WTC11 (cell line): ENCODE measurements at regions of chr18 and their contacts with region 1.

Region 1: GRCh38 chr18:12890506-12890905 is 6.5 kb upstream of the PTPN2 start:
- DNase-seq: no peak
- ATAC-seq: peak; percentile 74
- H3K4me3 Mint-ChIP-seq: no peak overlapping the region
- H3K27ac Mint-ChIP-seq: no peak overlapping the region
- H3K4me1 Mint-ChIP-seq: peaks cover 9% of the 10 kb centered on the region
- H3K27me3 Mint-ChIP-seq: no peaks in the 10 kb centered on the region
- CTCF ChIP-seq: no peak

Region 2: DNA sequence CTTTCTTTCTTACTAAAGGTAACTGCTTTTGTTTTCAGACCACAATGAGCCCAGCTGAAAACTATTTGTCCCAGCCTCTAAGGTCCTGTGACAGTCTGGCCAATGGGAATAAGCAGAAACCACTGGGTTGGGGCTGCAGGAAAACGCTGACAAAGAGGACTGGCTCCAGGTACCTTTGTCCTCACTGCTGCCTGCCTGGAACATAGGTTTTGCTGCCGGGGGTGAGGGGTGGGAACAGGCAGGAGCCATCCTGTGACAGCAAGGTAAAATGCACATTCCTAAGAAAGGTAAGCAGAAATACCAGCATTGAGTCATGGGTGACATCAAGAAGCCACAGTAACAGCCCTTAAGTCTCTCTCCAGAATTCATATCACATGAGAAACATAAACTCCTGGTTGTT is 28.0 kb before region 1 on chr18:
- CTCF ChIA-PET with region 1: interaction called, 10 read pairs
- POLR2A ChIA-PET with region 1: interaction called, 5 read pairs
- DNase-seq: peak; percentile 69
- ATAC-seq: peak; percentile 99
- H3K4me3 Mint-ChIP-seq: peak overlapping the region; percentile 49; the same call in 1 of the 2 replicates
- H3K27ac Mint-ChIP-seq: peak overlapping the region; percentile 98
- H3K4me1 Mint-ChIP-seq: peaks cover 26% of the 10 kb centered on the region
- H3K27me3 Mint-ChIP-seq: no peaks in the 10 kb centered on the region
- CTCF ChIP-seq: no peak

Region 3: DNA sequence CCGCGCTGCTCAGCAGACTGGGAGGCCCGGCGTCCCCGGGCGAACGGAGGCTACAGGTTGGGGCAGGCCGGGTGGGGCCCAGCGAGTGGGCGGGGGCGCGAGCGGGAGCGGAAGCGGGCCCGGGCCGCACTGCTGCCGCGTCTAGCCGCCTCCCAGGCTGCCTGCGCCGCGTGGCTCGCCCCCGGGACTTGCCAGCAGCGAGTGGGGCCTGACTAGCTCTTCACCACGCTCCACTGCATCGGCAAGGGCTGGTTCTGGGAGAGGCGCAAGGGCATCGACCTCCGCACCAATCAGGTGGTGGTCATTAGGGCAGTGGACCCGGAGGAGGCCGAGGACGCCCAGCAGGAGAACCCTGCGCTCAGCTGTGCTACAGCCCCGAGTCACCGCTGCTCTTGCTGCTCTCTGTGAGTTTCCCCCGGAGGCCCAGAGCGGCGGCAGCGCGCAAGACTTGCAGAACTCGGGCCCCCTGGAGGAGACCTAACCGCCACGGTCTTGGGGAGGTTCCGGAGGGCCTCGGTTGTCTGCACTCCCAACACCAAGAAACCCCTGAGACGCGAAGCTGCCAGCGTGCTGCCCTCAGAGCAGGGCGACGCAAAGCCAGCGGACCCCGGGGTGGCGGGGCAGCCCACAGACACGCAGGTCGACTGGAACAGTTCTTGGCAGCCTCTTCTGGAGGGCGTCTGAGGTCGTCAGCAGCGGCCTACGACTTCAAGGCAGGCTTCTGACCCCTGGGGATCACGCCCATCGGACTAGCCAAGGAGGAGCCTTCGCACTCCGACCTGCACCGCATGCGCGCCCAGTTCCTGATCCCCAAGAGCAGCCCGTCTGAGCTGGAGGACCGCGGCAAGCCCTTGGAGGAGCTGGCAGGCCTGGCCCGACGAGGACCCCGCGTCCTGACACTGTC is 20.8 kb after region 1 on chr18:
- CTCF ChIA-PET with region 1: interaction called, 12 read pairs
- POLR2A ChIA-PET with region 1: no interaction called
- DNase-seq: peak; percentile 63
- ATAC-seq: peak; percentile 56
- H3K4me3 Mint-ChIP-seq: peak overlapping the region; percentile 63
- H3K27ac Mint-ChIP-seq: no peak overlapping the region
- H3K4me1 Mint-ChIP-seq: no peaks in the 10 kb centered on the region; the same call in 1 of the 2 replicates
- H3K27me3 Mint-ChIP-seq: peaks cover 54% of the 10 kb centered on the region
- CTCF ChIP-seq: no peak

Region 4: GRCh38 chr18:13039806-13040205 is 149.3 kb after region 1 on chr18:
- CTCF ChIA-PET with region 1: no interaction called
- POLR2A ChIA-PET with region 1: no interaction called
- DNase-seq: no peak
- ATAC-seq: no peak
- H3K4me3 Mint-ChIP-seq: no peak overlapping the region
- H3K27ac Mint-ChIP-seq: 0 out of 2 replicates have a peak overlapping the region, but pooled peaks have one; percentile 31
- H3K4me1 Mint-ChIP-seq: no peaks in the 10 kb centered on the region
- H3K27me3 Mint-ChIP-seq: no peaks in the 10 kb centered on the region
- CTCF ChIP-seq: no peak

Region 5: GRCh38 chr18:13401404-13401803 is 510.9 kb after region 1 on chr18:
- CTCF ChIA-PET with region 1: no interaction called
- POLR2A ChIA-PET with region 1: no interaction called
- DNase-seq: no peak
- ATAC-seq: no peak
- H3K4me3 Mint-ChIP-seq: no peak overlapping the region
- H3K27ac Mint-ChIP-seq: no peak overlapping the region
- H3K4me1 Mint-ChIP-seq: no peaks in the 10 kb centered on the region
- H3K27me3 Mint-ChIP-seq: no peaks in the 10 kb centered on the region
- CTCF ChIP-seq: no peak